ENCODE measurements at regions of chr4 and their contacts with region 1.

Region 1: GRCh38 chr4:79678472-79679202 is 270.6 kb upstream of the GK2 start:
- DNase-seq: peak; percentile 46 to 77 (median 53)
- ATAC-seq: peak; percentile 87
- H3K4me3 ChIP-seq: no peak overlapping the region
- H3K27ac ChIP-seq: peak overlapping the region; percentile 28; the same call in 2 of the 3 replicates
- H3K4me1 ChIP-seq: peaks cover 0 to 25% of the 10 kb centered on the region in 2 experiments; a peak in 3 of 5 replicates
- H3K27me3 ChIP-seq: no peaks in the 10 kb centered on the region
- CTCF ChIP-seq: no peak
- EP300 ChIP-seq: peak; percentile 84
- POLR2A ChIP-seq: no peak
- RAD21 ChIP-seq: peak in 1 of 2 experiments; percentile 22; a peak in 2 of 4 replicates

Region 2: DNA sequence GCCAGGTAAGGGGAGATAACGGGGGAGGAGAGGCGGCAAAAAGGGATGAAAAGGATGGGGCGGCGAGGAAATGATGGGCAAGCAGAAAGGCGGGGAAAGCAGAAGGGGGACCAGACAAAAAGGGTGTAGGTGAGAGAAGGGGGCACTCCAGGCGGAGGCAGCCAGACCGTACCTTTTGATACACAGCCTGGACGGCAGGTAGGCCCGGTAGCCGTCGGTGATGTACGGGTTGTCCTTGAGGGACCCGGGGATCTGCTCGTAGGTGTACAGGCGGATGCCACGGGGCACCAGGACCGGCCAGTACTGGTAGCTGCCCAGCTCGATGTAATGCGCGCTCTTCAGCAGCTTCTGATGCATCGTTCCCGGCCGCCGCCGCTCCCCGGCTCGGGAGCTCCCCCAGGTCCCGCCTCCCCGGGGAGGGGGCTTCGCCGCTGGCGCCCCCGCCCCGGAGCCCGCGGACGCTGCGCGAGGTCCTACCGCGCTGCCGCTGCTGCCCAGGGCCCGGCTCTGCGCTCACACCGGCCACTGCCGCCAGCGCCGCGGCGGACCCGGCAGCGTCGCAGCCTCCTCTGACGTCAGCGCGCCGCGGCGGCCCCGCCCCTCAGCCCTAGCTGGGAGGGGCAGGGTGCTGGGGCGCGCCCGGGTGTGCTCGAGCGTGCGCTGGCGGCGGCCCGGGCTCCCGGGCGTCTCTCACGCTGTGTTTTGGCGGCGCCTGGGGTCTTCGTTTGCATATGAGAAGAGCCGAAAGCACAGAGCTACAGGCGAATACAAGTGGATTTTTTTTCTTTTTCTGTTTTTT is 739.6 kb before region 1 on chr4 and contains the start of gene PAQR3:
- CTCF ChIA-PET with region 1: no interaction called
- POLR2A ChIA-PET with region 1: no interaction called
- in situ Hi-C with region 1: no loop called
- intact Hi-C with region 1: no loop called
- DNase-seq: peak; percentile 91 to 95 (median 94)
- ATAC-seq: peak; percentile 95
- H3K4me3 ChIP-seq: peak within 1 kb of the TSS; percentile 68
- H3K27ac ChIP-seq: peak within 1 kb of the TSS; percentile 68
- H3K4me1 ChIP-seq: peaks cover 10 to 19% of the 10 kb centered on the region in 2 experiments; a peak in 4 of 5 replicates
- H3K27me3 ChIP-seq: no peaks in the 10 kb centered on the region
- CTCF ChIP-seq: 0 out of 6 replicates have a peak, but pooled peaks of 2 of the 3 experiments have one; percentile 2 to 11
- EP300 ChIP-seq: peak; percentile 31; the same call in 1 of the 2 replicates
- POLR2A ChIP-seq: peak; percentile 74
- RAD21 ChIP-seq: 0 out of 4 replicates have a peak, but pooled peaks of 1 of the 2 experiments have one; percentile 14
- polyA plus RNA-seq, gene PAQR3: 10.7 to 12.7 TPM

Region 3: DNA sequence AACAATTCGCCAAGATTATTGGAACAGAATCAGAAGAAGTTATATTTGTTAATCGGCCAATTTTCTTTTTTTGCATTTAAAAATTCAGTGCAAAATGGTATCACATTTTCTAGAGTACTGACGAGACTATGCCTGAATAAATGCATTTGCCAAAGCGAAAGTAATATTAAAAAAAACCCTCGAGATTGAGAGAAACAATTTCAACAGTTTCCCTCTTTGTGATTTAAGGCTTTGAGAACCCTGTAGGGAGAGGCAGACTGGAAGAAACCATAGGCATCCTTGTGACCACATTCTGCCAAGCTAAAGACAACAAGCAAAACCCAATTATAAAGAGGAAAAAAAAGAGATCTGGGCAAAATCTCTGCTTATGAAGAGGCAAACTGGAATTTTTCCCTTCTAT is 52.5 kb before region 1 on chr4:
- CTCF ChIA-PET with region 1: no interaction called
- POLR2A ChIA-PET with region 1: no interaction called
- in situ Hi-C with region 1: no loop called
- intact Hi-C with region 1: loop called (anchors 5 kb)
- DNase-seq: no peak
- ATAC-seq: no peak
- H3K4me3 ChIP-seq: 0 out of 2 replicates have a peak overlapping the region, but pooled peaks have one; percentile 4
- H3K27ac ChIP-seq: no peak overlapping the region
- H3K4me1 ChIP-seq: peaks cover 0 to 3% of the 10 kb centered on the region in 2 experiments; a peak in 2 of 5 replicates
- H3K27me3 ChIP-seq: no peaks in the 10 kb centered on the region
- CTCF ChIP-seq: no peak
- EP300 ChIP-seq: no peak
- POLR2A ChIP-seq: no peak
- RAD21 ChIP-seq: no peak

Measured in K562 (cell line).